Esophagus muscularis mucosa (tissue), 4 donors: ENCODE measurements at regions of chr16 and their contacts with region 1.

Region 1: DNA sequence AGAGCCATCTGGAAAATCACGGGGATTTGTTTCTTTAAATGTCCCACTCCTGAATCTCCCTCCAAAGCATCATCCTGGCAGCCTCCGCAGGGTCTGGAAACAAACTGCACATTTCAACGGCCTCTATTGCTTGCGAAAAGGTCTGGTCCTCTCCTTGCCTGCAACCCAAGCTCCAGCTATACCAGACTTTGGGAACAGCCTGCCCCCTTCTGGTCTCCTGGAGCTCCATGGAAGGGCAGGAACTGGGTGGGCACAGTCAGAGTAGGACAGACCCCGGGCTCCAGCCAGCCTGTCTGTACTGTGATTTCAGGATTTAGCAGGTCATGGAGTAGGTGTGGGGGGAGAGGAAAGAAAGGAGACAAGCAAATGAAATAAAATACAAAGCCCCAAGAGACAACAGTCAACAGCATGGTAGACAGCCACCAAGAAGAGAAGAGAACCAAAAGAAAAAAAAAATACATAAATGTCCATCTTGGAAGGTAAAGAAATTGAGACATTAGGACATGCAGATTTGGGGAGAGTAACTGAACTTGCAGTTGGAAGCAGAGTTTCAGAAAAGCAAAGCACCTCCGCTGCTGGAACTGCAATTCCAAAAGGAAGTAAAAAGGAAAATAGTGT is 2.7 kb downstream of the XYLT1 start:
- DNase-seq: no peak
- H3K4me3 ChIP-seq: peak overlapping the region; percentile 71 to 83 (median 79)
- H3K27ac ChIP-seq: peak overlapping the region; percentile 89 to 92 (median 90)
- H3K4me1 ChIP-seq: peaks cover 21 to 61% (median 57%) of the 10 kb centered on the region in 4 donors
- H3K27me3 ChIP-seq: peaks cover 0 to 3% (median 0%) of the 10 kb centered on the region in 4 donors
- CTCF ChIP-seq: peak; percentile 72 to 84 (median 75)
- EP300 ChIP-seq: no peak
- POLR2A ChIP-seq: no peak

Region 2: DNA sequence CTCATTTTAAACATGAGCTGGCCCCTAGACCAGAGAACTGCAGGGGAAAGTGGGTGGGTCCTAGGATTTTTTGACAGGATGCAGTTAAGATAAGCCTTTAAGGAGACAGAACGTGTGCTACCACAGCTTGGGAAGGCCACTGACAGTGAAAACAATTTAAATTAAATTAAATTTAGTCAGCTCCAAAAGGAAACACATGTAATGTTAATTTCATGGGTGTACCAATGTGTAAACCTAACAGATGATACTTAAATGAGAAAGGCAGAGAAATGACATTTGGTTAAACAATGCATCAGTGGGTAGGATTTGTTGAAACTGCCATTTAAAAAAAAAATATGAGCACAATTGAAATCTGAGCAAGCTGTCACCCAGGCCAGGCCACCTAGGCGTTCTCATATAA is 248.0 kb before region 1 on chr16:
- intact Hi-C with region 1: loop called (anchors 5 kb)
- DNase-seq: no peak
- H3K4me3 ChIP-seq: no peak overlapping the region
- H3K27ac ChIP-seq: peak overlapping the region in 3 of 4 donors; percentile 9 to 73 (median 30)
- H3K4me1 ChIP-seq: peaks cover 13 to 57% (median 43%) of the 10 kb centered on the region in 4 donors
- H3K27me3 ChIP-seq: no peaks in the 10 kb centered on the region
- CTCF ChIP-seq: no peak
- EP300 ChIP-seq: no peak
- POLR2A ChIP-seq: no peak

Region 3: GRCh38 chr16:17277977-17278381 is 190.1 kb before region 1 on chr16:
- intact Hi-C with region 1: loop called (anchors 5 kb)
- DNase-seq: no peak
- H3K4me3 ChIP-seq: no peak overlapping the region
- H3K27ac ChIP-seq: peak overlapping the region in 1 of 4 donors; percentile 1
- H3K4me1 ChIP-seq: peaks cover 0 to 43% (median 37%) of the 10 kb centered on the region in 4 donors
- H3K27me3 ChIP-seq: no peaks in the 10 kb centered on the region
- CTCF ChIP-seq: peak; percentile 34 to 49 (median 36)
- EP300 ChIP-seq: no peak
- POLR2A ChIP-seq: no peak

Region 4: DNA sequence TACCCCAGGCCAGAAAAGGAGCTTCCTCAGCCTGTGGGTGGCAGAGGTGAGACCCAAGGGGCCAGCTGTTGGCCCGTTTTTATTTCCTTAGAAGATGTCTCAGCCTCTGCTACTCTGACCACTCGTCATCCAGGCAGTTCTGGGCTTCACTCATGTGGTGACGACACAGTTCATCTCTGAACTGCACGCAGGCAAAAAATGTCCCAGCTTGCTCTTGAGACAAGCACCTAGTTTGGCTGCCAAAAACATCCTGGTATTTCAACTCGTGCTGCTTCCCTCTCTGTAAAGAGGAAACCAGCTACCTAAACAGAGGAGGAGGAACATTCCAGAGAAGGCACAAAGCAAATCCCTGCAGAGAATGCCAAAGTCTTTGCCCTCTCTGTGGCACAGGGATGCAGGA is 123.0 kb before region 1 on chr16:
- intact Hi-C with region 1: loop called (anchors 5 kb)
- DNase-seq: peak; percentile 96
- H3K4me3 ChIP-seq: no peak overlapping the region
- H3K27ac ChIP-seq: peak overlapping the region; percentile 88 to 93 (median 91)
- H3K4me1 ChIP-seq: peaks cover 45 to 89% (median 83%) of the 10 kb centered on the region in 4 donors
- H3K27me3 ChIP-seq: no peaks in the 10 kb centered on the region
- CTCF ChIP-seq: no peak
- EP300 ChIP-seq: peak; percentile 86
- POLR2A ChIP-seq: no peak

Region 5: DNA sequence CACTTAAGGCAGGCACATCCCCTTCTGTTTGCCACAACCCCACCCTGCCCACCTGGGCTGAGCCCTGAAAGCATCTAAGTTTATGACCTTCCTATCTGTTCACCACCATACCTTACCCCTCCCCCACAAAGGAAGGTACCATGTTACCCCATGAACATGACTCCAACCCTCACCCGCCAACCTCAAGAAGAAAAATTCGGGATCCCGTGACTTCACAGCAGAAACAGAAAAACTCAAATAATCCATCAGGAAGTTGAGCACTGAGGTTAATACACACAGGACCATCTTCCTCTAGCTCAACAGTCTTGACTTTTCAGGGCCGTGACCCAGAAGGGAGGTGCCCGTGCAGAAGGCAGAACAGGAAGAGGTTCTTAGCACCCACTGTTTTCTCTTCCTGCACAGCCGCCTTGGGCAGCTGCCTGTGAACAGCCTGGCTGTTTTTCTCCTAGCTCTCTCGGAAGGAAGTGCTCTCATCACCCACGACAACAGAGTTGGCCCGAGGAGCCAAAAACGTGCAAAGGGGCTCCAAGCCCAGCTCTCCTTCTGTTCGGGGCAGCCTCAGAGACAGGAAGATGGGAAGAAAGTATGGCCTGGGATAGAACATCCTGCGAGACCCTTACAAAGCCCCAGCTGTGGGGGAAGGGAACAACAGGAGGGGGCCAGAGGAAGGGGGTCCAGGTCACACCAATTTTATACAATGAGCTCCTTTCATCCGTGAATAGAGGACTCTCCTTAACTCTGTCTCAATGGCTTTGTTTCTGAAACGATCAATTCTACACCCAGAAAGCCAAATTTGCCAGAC is 98.4 kb before region 1 on chr16:
- intact Hi-C with region 1: loop called (anchors 5 kb)
- DNase-seq: no peak
- H3K4me3 ChIP-seq: no peak overlapping the region
- H3K27ac ChIP-seq: peak overlapping the region; percentile 32 to 66 (median 60)
- H3K4me1 ChIP-seq: peaks cover 24 to 80% (median 75%) of the 10 kb centered on the region in 4 donors
- H3K27me3 ChIP-seq: no peaks in the 10 kb centered on the region
- CTCF ChIP-seq: no peak
- EP300 ChIP-seq: no peak
- POLR2A ChIP-seq: no peak

Region 6: DNA sequence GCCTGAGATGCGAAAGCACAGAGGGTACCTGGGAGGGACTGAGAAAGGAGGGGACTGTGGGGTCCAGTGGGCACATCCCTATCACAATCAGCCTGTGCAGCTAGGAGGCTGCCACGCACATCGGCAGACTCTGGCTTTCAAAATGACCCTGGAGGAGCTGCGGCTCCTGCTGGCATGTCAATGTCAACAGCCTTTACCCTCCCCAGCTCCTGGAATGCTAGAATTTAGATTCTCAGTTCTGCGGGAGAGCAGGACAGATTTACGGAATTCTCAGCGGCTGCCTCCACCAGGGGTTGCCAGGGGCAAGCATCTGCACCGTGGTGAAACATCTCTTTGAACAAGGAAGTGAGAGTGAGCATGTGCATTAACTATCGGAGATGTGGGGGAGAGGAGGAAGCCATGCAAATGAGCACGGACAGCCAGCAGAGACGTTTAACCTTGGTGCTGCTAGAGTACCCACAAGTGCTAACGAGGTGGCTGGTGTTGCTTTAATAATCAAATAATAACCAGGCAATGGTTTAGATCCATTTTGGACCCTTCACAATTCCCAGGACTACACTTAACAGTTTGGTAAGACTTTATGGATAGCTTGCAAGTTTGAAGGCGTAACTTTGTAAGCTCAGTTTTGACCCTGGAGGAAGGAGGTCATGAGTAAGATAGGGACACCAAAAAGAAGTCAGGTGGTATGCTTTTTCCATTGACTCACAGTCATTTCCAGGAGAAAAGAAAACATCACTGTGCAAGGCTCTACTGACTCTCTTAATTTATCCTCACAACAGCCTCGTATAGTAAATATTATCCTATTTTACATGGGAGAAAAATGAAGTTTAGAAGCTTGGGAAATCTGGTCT is 51.3 kb before region 1 on chr16:
- intact Hi-C with region 1: loop called (anchors 5 kb)
- DNase-seq: no peak
- H3K4me3 ChIP-seq: peak overlapping the region in 2 of 4 donors; percentile 4 to 23
- H3K27ac ChIP-seq: peak overlapping the region; percentile 62 to 95 (median 80)
- H3K4me1 ChIP-seq: peaks cover 9 to 62% (median 57%) of the 10 kb centered on the region in 4 donors
- H3K27me3 ChIP-seq: no peaks in the 10 kb centered on the region
- CTCF ChIP-seq: peak; percentile 18 to 34 (median 32)
- EP300 ChIP-seq: no peak
- POLR2A ChIP-seq: no peak